AG04449 (cell line): ENCODE measurements at regions of chr3 and their contacts with region 1.

Region 1: GRCh38 chr3:14921078-14921616 is 26.2 kb upstream of the NR2C2 start:
- DNase-seq: peak; percentile 42
- H3K4me3 ChIP-seq: no peak overlapping the region
- CTCF ChIP-seq: peak; percentile 95

Region 2: DNA sequence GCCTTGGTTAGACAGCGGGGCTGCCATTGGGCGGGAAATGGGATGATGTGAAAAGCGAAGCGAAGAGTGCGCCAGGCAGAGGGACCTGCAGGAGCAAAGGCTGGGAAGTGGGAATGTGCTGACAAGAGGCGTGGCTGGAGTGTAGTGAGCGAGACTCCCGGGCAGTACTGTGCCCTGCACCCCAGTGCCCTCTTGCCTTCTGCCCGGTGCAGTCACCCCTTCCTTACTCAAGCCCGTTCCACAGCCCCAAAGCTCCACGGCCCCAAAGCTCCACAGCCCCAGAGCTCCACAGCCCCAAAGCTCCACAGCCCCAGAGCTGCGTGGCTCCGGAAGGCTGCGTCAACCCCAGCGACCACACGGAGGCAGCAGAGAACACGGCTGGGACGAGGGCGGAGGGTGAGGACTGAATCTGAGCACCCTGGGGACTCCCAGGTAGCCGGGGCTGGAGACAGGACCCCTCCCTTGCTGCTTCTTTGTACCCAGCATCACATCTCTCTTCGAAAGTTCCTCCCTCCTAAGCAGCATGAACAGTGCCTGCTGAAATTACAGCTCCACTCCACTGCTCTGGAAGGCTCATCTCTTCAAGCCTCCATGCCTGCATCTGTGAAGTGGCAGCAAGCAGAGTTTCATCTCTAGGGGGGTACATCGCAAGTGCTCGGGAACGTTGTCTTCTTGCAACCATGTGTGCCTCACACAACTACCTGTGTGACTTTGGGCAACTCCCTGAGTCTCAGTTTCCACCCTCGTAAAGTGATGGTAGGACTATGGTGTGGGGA is 1263.3 kb before region 1 on chr3:
- CTCF ChIA-PET with region 1: interaction called, 55 read pairs
- POLR2A ChIA-PET with region 1: no interaction called
- DNase-seq: no peak
- H3K4me3 ChIP-seq: no peak overlapping the region
- CTCF ChIP-seq: peak; percentile 96

Region 3: DNA sequence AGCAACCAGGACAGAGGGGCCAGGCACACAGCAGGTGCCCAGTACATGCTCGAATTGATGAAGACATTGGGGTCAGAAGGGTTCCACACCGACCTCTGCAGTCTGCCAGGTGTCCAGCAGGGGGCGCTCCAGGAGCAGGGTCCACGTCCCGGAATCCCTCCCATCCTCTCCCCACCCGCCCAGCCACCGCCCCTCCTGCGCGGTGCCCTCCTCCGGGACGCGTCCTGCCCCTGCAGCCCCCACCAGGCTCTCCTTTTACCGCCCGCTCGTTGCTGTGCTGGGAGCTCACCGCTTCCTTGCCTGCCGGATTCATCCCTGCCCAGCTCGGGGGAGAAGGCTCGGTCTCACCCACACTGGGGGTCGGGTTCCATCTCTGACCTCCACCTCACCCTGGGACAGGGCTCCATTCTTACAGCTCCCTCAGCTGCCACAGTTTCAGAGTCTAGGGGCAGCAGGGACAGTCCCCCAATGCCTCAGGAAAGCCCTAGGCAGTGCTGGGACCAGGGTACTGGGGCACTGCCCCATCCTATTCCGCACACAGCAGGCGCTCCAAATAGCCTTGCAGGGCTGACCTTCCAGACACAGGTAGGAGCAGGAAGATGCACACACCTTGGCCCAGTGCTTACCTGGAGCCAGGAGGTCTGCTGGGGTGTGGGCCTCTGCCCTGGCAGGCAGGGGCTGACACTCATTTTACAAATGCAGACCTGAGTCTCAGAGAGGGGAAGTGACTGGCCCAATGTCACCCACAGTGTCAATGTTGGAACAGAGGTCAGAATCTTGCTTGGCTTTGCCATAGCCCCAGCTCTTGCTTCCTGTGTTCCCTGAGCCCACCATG is 412.0 kb before region 1 on chr3:
- CTCF ChIA-PET with region 1: interaction called, 55 read pairs
- POLR2A ChIA-PET with region 1: no interaction called
- DNase-seq: no peak
- H3K4me3 ChIP-seq: peak overlapping the region; percentile 12; the same call in 1 of the 2 replicates
- CTCF ChIP-seq: peak; percentile 91

Region 4: GRCh38 chr3:14678015-14678503 is 243.1 kb before region 1 on chr3:
- CTCF ChIA-PET with region 1: interaction called, 272 read pairs
- POLR2A ChIA-PET with region 1: no interaction called
- DNase-seq: no peak
- H3K4me3 ChIP-seq: no peak overlapping the region
- CTCF ChIP-seq: no peak

Region 5: DNA sequence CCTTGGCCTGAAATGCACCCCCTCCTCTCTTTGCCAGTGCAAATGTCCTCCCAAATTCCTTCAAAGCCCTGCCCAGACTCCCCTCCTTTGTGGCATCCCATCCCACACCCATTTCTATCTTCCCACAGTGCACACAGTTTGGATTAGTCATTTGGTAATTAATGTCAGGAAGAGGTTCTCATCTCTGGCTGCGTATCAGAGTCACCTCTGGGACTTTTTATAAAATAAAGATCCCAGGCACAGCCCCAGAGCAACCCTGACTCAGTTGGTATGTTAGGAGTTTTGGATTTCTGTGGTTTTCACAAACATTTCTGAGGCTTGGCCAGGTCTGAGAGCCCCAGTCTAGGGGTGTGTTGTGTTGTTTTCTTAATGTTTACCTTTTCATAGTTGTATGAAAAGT is 204.6 kb before region 1 on chr3:
- CTCF ChIA-PET with region 1: no interaction called
- POLR2A ChIA-PET with region 1: no interaction called
- DNase-seq: no peak
- H3K4me3 ChIP-seq: no peak overlapping the region
- CTCF ChIP-seq: no peak

Region 6: DNA sequence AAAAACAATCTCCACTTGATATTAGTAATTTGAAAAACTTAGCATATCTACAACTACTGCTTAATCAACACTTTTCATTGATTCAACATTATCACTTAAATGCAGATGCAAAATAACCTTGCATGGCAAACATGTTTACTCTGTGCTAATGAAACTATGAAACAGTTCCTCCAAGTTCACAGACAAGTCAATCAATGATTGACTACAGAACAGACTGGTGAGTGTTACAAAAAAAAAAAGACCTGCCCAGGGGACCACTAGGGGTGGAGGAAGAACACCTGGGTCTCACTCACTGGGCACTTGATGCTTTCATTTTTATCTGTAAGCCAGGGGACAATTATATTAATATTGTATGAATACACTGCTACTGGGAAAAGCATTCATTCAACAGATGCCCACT is 21.9 kb after region 1 on chr3:
- CTCF ChIA-PET with region 1: interaction called, 29 read pairs
- POLR2A ChIA-PET with region 1: no interaction called
- DNase-seq: no peak
- H3K4me3 ChIP-seq: no peak overlapping the region
- CTCF ChIP-seq: no peak

Region 7: DNA sequence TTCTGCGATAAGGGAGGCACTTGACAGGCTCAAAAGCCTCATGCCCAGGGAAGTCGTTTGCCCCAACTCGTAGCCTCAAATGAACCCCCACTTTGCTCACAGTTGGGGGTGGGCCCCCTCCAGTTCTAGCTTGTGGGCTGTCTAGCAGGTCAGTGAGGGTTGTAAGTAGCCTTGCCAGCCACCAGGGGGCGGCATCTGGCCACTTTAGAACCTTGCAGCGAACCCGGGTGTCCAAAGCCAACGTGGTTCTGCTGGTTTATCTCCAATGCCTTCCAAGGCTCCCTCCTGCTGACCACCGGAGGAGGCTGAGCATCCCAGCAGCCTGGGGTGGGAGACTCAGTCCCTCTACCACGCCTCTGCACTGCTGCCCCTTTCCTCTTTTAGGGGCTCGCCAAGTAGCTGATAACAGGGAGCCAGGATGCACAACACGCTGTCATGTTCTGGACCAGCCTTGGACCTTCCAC is 187.0 kb after region 1 on chr3:
- CTCF ChIA-PET with region 1: interaction called, 21 read pairs
- POLR2A ChIA-PET with region 1: no interaction called
- DNase-seq: no peak
- H3K4me3 ChIP-seq: no peak overlapping the region
- CTCF ChIP-seq: peak; percentile 86